ENCODE measurements at regions of chr4 and their contacts with region 1.

Region 1: GRCh38 chr4:184347251-184348239 is 126.8 kb downstream of the IRF2 start:
- DNase-seq: peak; percentile 58 to 82 (median 68)
- ATAC-seq: peak; percentile 87
- H3K4me3 ChIP-seq: no peak overlapping the region
- H3K27ac ChIP-seq: peak overlapping the region; percentile 50
- H3K4me1 ChIP-seq: peaks cover 30 to 34% of the 10 kb centered on the region in 2 experiments
- H3K27me3 ChIP-seq: no peaks in the 10 kb centered on the region
- CTCF ChIP-seq: no peak
- EP300 ChIP-seq: no peak
- POLR2A ChIP-seq: no peak; the same call in 1 of the 2 replicates
- RAD21 ChIP-seq: no peak

Region 2: DNA sequence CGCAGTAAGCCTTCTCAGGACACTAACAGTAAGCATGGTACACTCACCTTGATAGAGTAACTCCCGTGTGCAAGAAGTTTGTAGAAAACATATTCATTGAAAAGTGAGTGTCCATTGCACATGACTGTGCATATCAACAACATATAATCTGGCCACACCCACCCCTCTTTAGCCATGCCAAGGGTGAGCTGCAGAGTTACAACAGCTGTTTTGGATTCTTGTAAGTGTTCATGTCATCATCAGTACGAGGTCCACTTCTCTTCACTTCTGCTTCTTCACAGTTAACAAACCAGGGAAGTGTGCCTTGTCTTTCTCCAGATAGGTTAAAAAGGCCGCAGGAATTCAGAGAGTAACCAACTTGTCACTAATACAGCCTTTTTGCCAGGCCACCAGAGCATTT is 10.2 kb after region 1 on chr4:
- CTCF ChIA-PET with region 1: no interaction called
- POLR2A ChIA-PET with region 1: interaction called, 11 read pairs
- in situ Hi-C with region 1: no loop called
- intact Hi-C with region 1: no loop called
- DNase-seq: no peak
- ATAC-seq: peak; percentile 47
- H3K4me3 ChIP-seq: no peak overlapping the region
- H3K27ac ChIP-seq: no peak overlapping the region
- H3K4me1 ChIP-seq: peaks cover 0 to 12% of the 10 kb centered on the region in 2 experiments; a peak in 3 of 5 replicates
- H3K27me3 ChIP-seq: no peaks in the 10 kb centered on the region
- CTCF ChIP-seq: no peak
- EP300 ChIP-seq: no peak
- POLR2A ChIP-seq: no peak
- RAD21 ChIP-seq: no peak

Measured in K562 (cell line).